Endothelial cell of umbilical vein (primary cell): ENCODE measurements at regions of chr5 and their contacts with region 1.

Region 1: GRCh38 chr5:134101686-134102439 is 12.6 kb upstream of the TCF7 start:
- DNase-seq: peak; percentile 48
- H3K4me3 ChIP-seq: no peak overlapping the region
- H3K27ac ChIP-seq: no peak overlapping the region
- H3K4me1 ChIP-seq: no peaks in the 10 kb centered on the region
- H3K27me3 ChIP-seq: peaks cover 0 to under 1% of the 10 kb centered on the region in 2 experiments
- CTCF ChIP-seq: peak; percentile 85 to 97
- POLR2A ChIP-seq: no peak

Region 2: DNA sequence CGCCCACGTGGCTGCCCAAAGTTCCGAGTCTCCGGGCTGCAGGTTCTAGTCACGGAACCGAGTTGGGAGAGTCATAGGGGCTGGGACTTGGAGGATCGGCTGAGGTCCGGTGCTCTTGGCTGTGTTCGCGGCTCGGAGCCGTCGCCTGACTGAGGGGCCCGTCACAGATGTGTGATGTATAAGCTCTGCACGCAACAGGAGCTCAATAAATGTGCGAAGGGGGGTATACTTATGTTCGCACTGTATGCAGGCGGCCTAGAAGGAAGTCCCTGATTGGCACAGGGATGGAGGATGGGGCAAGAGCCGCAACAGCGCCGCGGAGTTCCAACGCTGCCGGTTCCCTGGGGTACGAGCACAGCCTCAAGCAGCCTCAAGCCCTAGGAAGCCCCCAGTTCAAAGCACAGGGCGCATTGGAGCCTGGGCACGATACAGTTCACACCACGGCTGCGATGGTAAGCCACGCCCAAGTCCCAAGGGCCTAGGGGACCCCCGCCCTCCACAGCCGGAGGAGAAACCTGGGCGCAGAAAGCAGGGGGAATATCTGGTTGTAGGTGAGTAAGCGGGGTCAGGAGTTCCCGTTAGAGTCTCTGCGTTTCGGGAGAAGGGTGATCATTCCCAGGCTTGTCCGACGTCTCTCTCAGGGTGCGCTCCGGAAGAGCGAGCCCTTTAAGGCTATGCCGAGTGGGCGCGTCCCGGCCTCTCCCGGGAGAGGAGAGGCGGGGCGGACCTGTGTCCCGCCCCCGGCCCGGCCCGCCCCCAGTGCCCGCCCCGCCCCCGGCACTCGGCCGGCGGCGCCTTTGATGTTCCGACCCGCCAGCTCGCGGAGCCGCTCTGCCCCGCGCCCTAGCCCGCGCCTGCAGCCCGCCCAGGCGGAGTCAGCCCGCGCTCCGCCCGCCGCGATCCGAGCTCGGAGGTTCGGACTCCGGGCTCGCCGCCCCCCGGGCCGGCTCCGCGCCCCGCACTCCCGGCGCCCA is 12.3 kb after region 1 on chr5 and contains the start of gene TCF7:
- CTCF ChIA-PET with region 1: interaction called, 47 read pairs
- POLR2A ChIA-PET with region 1: no interaction called
- dilution Hi-C with region 1: no loop called
- intact Hi-C with region 1: loop called (anchors 1 kb)
- DNase-seq: peak; percentile 59
- H3K4me3 ChIP-seq: peak within 1 kb of the TSS; percentile 44 to 74 (median 72)
- H3K27ac ChIP-seq: no peak within 1 kb of the TSS
- H3K4me1 ChIP-seq: peaks cover 9% of the 10 kb centered on the region
- H3K27me3 ChIP-seq: peaks cover 16% of the 10 kb centered on the region in 2 experiments
- CTCF ChIP-seq: no peak
- POLR2A ChIP-seq: no peak
- total RNA-seq, gene TCF7: 2.3 and 2.5 TPM in 2 replicates